ENCODE measurements at regions of chr1 and their contacts with region 1.

Region 1: GRCh38 chr1:167533851-167534300 is 15.5 kb upstream of the CD247 start:
- DNase-seq: peak; percentile 58 to 89 (median 70)
- H3K4me3 ChIP-seq: no peak overlapping the region
- H3K27ac ChIP-seq: no peak overlapping the region
- H3K4me1 ChIP-seq: no peaks in the 10 kb centered on the region
- H3K27me3 ChIP-seq: no peaks in the 10 kb centered on the region
- CTCF ChIP-seq: peak; percentile 70 to 91 (median 80)
- POLR2A ChIP-seq: no peak

Region 2: DNA sequence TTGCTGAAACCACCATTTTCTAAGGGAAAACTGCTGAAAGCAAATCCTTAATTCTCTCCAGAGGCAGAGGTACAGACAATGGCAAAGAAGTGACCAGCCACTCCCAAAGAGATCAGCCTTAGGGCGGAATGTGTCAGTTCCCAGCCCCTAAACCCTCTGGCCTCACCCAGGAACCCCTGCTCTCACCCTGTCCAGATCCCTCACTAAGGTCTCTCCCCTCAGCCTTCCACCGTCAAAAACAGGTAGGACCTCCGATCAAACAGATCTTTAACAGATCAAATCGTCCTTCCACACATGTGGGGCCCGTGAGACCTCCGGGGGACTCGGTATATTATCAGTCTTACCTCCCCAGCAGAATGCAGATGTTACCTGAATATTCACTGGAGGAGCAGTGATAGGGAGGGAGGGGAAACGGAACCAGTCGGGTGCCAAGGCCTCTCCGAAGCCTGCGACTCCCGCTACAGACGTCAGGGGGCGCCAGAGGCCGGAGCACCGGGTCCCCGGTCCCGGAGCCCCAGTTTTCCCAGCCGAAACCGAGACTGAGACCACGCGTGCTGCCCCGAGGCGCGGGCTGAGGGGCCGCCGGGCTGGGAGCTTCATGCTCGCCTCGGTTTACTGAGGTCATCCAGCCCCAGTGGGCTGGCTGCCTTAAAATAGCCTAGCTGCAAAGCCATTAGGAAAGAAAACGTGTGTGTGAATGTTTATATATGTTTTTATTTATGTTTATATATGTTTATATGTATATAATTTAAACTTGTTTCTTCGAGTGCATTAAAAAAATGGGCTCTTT is 467.3 kb before region 1 on chr1:
- intact Hi-C with region 1: loop called (anchors 5 kb)
- DNase-seq: peak; percentile 52 to 88 (median 80)
- H3K4me3 ChIP-seq: peak overlapping the region in 1 of 4 donors; percentile 17
- H3K27ac ChIP-seq: no peak overlapping the region
- H3K4me1 ChIP-seq: peaks cover 3 to 7% of the 10 kb centered on the region in 2 donors
- H3K27me3 ChIP-seq: peaks cover 3% of the 10 kb centered on the region
- CTCF ChIP-seq: peak; percentile 87 to 96 (median 90)
- POLR2A ChIP-seq: no peak

Region 3: DNA sequence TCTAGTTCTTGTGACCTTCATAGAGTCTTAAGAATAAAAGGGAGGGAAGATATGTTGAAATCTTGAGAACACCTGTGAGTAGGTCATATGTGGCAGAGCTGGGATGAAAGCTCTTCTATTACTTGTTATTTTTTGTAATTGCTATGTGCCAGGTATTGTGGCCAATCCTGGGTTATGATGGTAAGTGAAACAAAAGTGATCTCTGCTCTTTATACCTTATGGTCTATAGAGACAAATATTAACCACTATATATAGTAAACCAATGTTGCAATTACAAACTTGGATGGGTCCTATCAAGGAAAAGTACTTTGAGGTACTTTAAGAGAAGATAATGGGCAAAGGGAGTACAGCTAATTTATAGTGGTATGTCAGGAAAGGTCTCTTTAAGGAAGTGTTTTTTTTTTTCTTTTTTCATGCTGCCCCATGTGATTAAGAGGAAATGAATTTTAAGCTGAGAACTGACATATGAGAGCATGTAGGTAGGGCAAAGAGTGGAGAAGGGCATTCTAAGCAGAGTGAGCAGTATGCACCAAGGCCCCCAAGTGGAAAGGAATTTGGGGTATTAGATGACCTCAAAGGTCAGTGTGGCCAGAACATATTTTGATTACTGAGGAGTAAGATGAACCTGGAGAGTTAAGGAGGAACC is 269.9 kb before region 1 on chr1:
- intact Hi-C with region 1: loop called in 1 of 2 experiments (anchors 10 kb)
- DNase-seq: no peak
- H3K4me3 ChIP-seq: no peak overlapping the region
- H3K27ac ChIP-seq: no peak overlapping the region
- H3K4me1 ChIP-seq: peaks cover 5 to 51% of the 10 kb centered on the region in 2 donors
- H3K27me3 ChIP-seq: no peaks in the 10 kb centered on the region
- CTCF ChIP-seq: no peak
- POLR2A ChIP-seq: no peak

Region 4: DNA sequence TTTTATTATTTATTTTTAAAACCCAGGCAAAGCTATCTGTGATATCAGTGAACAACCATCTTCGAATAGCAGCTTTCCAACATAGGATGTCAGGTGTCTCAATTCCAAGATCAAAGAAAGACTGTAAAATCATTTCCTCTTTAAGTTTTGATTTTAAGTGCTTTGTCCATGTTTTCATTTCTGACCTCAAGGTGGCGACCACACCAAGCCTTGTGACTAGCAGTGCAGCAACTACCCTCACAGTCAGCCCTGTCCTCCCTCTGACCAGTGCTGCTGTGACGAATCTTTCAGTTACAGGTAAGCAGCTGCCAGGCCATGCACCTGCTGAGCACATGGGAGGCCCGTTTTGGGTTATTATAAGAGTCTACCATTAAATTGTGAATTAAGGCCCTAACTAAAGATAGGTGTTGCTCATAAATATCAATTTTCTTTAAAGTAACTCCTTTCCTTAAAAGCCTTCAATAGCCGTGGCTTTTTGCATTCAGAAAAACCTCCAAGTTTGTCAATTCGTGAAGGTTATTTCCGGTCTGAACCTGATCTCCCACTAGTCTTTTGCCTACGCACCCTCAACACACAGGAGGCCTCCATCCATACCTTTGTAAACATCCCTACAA is 132.5 kb before region 1 on chr1:
- intact Hi-C with region 1: loop called in 1 of 2 experiments (anchors 5 kb)
- DNase-seq: peak; percentile 51 to 82 (median 71)
- H3K4me3 ChIP-seq: no peak overlapping the region
- H3K27ac ChIP-seq: no peak overlapping the region
- H3K4me1 ChIP-seq: peaks cover 0 to 10% of the 10 kb centered on the region in 2 donors
- H3K27me3 ChIP-seq: no peaks in the 10 kb centered on the region
- CTCF ChIP-seq: peak; percentile 42 to 67 (median 58)
- POLR2A ChIP-seq: no peak

Region 5: DNA sequence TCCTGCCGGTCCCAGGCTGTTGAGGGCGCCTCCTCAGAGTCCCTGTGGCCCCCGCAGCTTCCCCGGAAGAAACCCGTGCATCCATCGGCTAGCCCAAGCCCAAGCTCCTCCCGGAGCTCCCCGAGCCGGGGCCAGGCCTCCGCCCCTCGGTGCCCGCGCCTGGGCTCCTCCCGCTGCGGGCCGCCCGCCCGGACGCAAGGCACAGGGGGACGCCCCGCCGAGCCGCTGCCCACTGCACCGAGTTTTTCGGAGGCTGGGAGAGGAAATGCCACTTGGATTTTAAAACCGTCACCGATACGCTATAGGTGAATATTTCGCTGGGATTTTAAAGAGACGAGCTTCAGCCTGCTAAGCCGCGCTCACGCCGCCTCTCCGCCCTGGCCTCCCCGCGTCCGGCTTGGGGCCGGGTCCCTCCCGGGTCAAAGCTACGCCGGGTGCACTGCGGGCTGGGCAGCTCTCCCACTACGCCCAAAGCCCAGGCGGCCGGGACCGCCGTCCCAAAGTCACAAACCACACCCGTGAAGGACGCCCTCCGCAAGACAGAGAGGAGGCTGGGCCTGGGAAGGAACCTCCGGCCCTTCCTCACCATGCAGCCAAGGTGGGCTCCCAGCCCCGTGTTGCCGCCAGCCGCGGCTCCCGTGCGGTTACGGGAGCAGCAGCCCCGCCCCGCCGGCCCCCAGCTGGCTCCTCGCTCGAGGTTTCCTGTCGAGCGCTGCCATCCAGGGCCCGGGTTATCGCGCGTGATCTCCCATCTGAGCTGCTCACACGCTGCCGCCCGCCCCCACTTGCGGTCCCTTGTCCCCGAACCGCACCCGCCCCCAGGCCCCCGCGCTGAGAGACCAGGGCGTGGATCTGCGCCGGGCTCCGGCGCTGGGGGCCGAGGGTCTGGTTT is 78.7 kb before region 1 on chr1:
- intact Hi-C with region 1: loop called in 1 of 2 experiments (anchors 5 kb)
- DNase-seq: peak; percentile 67 to 78 (median 77)
- H3K4me3 ChIP-seq: peak overlapping the region; percentile 46 to 89 (median 64)
- H3K27ac ChIP-seq: peak overlapping the region; percentile 46 to 90 (median 81)
- H3K4me1 ChIP-seq: peaks cover 0 to 13% of the 10 kb centered on the region in 2 donors
- H3K27me3 ChIP-seq: no peaks in the 10 kb centered on the region
- CTCF ChIP-seq: peak in 1 of 6 experiments; percentile 1
- POLR2A ChIP-seq: peak; percentile 14 to 48